CD4-positive, alpha-beta T cell (primary cell): ENCODE measurements at regions of chr9 and their contacts with region 1.

Region 1: DNA sequence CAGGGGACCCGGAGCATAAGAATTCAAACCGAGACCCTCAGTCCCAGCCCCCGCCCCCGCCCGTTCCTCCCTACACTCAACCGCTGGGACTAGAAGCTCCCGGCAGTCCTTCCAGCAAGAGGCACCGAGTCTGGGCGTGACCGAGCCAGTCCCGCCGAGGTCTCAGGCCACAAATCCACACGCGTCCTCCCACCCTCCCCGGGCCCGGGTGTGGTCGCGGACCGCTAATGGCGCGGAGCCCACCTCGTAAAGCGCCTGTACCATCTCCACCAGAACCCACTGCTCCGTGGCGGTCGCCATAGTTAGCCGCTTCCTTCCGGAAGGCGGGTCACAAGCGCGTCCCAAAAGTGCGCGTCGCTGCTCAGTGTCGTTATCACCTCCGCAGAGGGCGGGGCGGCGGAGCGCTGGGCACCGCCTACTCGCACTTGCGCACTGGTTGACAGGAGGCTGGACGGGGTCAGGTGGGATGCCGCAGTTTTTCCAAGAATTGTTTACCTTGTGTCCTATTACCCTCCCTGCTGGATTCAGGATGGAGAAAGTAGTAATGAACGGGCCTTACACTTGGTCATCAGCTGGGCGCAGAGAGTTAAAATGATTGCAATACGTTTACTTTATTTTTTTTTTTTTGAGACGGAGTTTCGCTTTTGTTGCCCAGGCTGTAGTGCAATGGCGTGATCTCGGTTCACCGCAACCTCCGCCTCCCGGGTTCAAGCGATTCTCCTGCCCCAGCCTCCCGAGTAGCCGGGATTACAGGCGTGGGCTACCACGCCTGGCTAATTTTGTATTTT is at the start of gene SPTLC1:
- DNase-seq: peak; percentile 90 to 98 (median 92)
- ATAC-seq: peak; percentile 94
- H3K4me3 ChIP-seq: peak within 1 kb of the TSS; percentile 71
- H3K4me3 Mint-ChIP-seq: peak within 1 kb of the TSS; percentile 94
- H3K27ac ChIP-seq: peak within 1 kb of the TSS; percentile 84 to 89
- H3K27ac Mint-ChIP-seq: peak within 1 kb of the TSS; percentile 97
- H3K4me1 ChIP-seq: peaks cover 9% of the 10 kb centered on the region
- H3K4me1 Mint-ChIP-seq: peaks cover 47% of the 10 kb centered on the region
- H3K27me3 ChIP-seq: no peaks in the 10 kb centered on the region
- H3K27me3 Mint-ChIP-seq: no peaks in the 10 kb centered on the region
- CTCF ChIP-seq: no peak
- total RNA-seq, gene SPTLC1: 40.9 to 43.0 TPM

Region 2: GRCh38 chr9:92293452-92294296 is 178.4 kb after region 1 on chr9 and contains the start of gene IARS1:
- CTCF ChIA-PET with region 1: no interaction called
- POLR2A ChIA-PET with region 1: no interaction called
- intact Hi-C with region 1: loop called in 1 of 2 experiments (anchors 5 kb)
- DNase-seq: peak; percentile 97 to 100 (median 99)
- ATAC-seq: peak; percentile 93
- H3K4me3 ChIP-seq: peak within 1 kb of the TSS; percentile 70
- H3K4me3 Mint-ChIP-seq: peak within 1 kb of the TSS; percentile 98
- H3K27ac ChIP-seq: peak within 1 kb of the TSS; percentile 73 to 74
- H3K27ac Mint-ChIP-seq: peak within 1 kb of the TSS; percentile 97
- H3K4me1 ChIP-seq: peaks cover 25% of the 10 kb centered on the region
- H3K4me1 Mint-ChIP-seq: peaks cover 69% of the 10 kb centered on the region
- H3K27me3 ChIP-seq: no peaks in the 10 kb centered on the region
- H3K27me3 Mint-ChIP-seq: no peaks in the 10 kb centered on the region
- CTCF ChIP-seq: no peak
- total RNA-seq, gene IARS1: 49.8 to 56.8 TPM

Region 3: DNA sequence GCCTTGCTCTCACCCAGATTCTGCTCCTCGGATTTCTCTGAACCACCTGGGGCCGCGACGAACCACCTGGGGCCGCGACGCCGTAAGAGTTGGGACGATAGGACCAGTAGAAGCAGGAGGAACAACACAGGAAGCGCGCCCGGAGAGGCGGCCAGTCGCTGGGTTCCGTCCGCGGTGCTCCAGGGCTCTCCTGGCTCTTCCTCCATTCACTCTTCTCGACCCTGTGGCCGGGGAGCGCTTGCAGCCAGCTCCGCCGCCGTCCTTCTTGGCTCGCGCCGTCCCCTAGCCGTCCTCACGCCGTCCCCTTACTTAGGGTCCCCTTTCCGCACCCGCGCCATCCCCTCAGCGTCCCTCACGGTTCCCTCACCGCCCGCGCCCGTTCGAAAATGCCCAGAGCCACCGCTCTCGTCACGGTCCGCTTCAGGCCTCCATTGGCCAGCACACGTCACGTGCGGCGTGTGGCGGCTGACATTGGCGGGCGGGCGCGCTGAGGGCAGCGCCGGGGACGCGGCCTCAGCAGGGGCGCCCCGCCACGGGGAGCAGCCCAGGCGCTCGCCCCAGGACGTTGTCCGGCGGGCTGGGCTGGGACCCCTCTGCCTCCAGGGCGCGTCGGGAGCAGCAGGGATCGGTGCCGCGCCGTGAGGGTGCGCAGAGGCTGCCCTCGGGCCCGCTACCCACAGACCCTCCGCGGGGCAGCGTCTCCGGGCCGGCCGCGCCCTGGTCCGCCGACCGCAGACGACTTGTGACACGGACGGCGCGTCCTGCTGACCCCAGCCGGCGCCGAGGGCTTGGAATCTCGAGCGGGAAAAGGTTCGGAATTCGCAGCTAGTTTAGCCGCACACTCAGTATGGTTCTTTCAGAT is 1915.3 kb after region 1 on chr9:
- CTCF ChIA-PET with region 1: no interaction called
- POLR2A ChIA-PET with region 1: interaction called, 3 read pairs
- intact Hi-C with region 1: loop called in 1 of 2 experiments (anchors 5 kb)
- DNase-seq: peak; percentile 53 to 90 (median 72)
- ATAC-seq: peak; percentile 99
- H3K4me3 ChIP-seq: peak overlapping the region; percentile 74
- H3K4me3 Mint-ChIP-seq: peak overlapping the region; percentile 94
- H3K27ac ChIP-seq: peak overlapping the region; percentile 18 to 46
- H3K27ac Mint-ChIP-seq: peak overlapping the region; percentile 76
- H3K4me1 ChIP-seq: peaks cover 15% of the 10 kb centered on the region
- H3K4me1 Mint-ChIP-seq: peaks cover 23% of the 10 kb centered on the region
- H3K27me3 ChIP-seq: no peaks in the 10 kb centered on the region
- H3K27me3 Mint-ChIP-seq: no peaks in the 10 kb centered on the region
- CTCF ChIP-seq: no peak